MCF 10A (cell line): ENCODE measurements at regions of chr14 and their contacts with region 1.

Region 1: DNA sequence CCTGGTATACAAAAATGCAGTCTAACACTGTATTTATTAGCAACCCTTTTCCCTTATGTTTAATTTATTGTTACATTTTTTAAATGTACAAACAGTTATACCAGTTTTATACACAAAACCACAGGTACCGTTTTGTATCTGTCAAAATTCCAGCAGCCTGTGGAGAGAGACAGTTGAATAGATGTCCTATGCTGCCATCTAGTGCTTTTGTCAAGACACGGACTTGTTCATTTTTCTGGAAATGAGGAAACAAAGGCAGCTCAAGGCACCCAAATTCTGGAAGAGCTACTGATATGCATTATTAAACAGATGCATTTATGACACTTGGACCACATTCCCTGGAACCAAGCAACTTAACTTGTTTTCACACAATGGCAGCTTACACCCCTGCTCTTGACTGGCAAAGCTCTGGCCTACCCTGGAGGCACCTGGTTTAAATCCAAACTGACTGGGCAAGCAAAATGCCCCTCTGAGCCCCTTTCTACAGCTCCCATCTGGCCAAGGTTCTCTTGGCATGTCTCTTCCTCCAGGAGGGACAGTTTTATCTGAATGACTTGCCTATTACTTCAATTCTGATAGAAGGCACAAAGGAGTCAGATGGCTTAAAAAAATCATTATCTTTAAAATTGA is 286.9 kb upstream of the PRKD1 start:
- DNase-seq: peak; percentile 72
- H3K4me3 Mint-ChIP-seq: no peak overlapping the region
- H3K27ac Mint-ChIP-seq: no peak overlapping the region
- H3K4me1 Mint-ChIP-seq: peaks cover 4% of the 10 kb centered on the region
- H3K27me3 Mint-ChIP-seq: no peaks in the 10 kb centered on the region
- CTCF ChIP-seq: peak; percentile 54

Region 2: GRCh38 chr14:29016050-29016900 is 1198.3 kb before region 1 on chr14:
- CTCF ChIA-PET with region 1: interaction called, 3 read pairs
- POLR2A ChIA-PET with region 1: no interaction called
- intact Hi-C with region 1: loop called (anchors 10 kb)
- DNase-seq: peak; percentile 31
- H3K4me3 Mint-ChIP-seq: no peak overlapping the region
- H3K27ac Mint-ChIP-seq: no peak overlapping the region
- H3K4me1 Mint-ChIP-seq: no peaks in the 10 kb centered on the region
- H3K27me3 Mint-ChIP-seq: peaks cover 73% of the 10 kb centered on the region
- CTCF ChIP-seq: peak; percentile 75

Region 3: GRCh38 chr14:29463727-29464395 is 750.7 kb before region 1 on chr14:
- CTCF ChIA-PET with region 1: no interaction called
- POLR2A ChIA-PET with region 1: no interaction called
- intact Hi-C with region 1: no loop called
- DNase-seq: no peak
- H3K4me3 Mint-ChIP-seq: no peak overlapping the region
- H3K27ac Mint-ChIP-seq: no peak overlapping the region
- H3K4me1 Mint-ChIP-seq: no peaks in the 10 kb centered on the region
- H3K27me3 Mint-ChIP-seq: peaks cover 99% of the 10 kb centered on the region
- CTCF ChIP-seq: no peak

Region 4: DNA sequence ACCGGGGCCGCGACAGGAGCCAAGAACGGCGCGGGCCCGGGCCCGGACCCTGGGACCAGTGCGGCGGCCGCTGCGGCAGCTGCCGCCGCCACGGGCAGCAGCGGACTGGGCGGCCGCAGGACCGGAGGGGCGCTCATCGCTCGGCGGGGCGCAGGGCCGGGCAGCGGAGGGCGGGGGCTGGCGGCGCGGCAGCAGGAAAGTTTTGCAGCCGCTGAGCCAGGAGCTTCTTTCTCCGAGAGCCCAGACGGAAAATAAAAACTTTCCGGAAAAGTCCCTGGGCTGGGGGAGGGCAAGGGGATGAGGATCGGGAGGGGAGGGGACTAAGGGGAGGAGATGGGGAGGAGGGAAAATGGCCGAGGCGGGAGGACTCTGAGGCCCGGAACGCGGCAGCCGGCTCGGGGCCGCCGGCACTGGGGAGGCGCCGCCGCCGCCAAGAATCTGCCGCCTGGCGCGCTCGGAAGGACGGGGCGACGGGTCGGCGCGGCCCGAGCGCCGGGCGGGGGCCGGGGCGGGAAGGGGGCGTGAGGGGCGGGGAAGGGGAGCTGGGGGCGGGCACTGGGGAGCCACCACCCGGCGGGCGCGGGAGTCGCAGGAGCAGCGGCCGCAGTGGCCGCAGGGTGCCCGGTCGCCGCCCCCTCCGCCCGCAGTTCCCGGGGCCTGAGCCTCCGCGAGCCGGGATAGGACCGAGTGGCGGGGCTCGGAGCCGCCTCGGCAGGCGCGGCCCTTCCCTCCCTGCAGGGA is 287.0 kb before region 1 on chr14 and contains the start of gene PRKD1:
- CTCF ChIA-PET with region 1: interaction called, 3 read pairs
- POLR2A ChIA-PET with region 1: no interaction called
- intact Hi-C with region 1: loop called (anchors 10 kb)
- DNase-seq: peak; percentile 50
- H3K4me3 Mint-ChIP-seq: peak within 1 kb of the TSS; percentile 98
- H3K27ac Mint-ChIP-seq: peak within 1 kb of the TSS; percentile 26
- H3K4me1 Mint-ChIP-seq: peaks cover 38% of the 10 kb centered on the region
- H3K27me3 Mint-ChIP-seq: no peaks in the 10 kb centered on the region
- CTCF ChIP-seq: peak; percentile 17
- total RNA-seq, gene PRKD1: 7.9 and 8.8 TPM in 2 replicates

Region 5: DNA sequence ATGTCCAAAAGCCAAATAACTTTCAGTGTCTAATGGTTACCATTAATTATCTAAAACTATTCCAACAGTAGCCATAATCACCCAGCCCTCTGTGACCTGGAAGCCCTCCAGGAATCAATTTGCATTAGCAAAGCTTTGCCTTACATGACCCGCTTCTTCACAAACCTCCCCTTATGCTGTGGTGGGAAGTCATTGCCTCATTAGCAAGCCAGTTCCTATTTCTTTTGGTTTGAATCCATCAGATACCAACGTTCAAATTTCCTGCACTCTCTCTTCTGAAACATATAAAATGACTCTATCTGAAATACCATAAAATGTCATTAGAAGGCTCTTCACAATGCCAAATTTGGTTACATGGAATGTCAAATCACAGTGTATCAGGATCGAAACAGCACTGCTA is 18.6 kb before region 1 on chr14:
- CTCF ChIA-PET with region 1: interaction called, 13 read pairs
- POLR2A ChIA-PET with region 1: no interaction called
- intact Hi-C with region 1: no loop called
- DNase-seq: no peak
- H3K4me3 Mint-ChIP-seq: no peak overlapping the region
- H3K27ac Mint-ChIP-seq: no peak overlapping the region
- H3K4me1 Mint-ChIP-seq: peaks cover 22% of the 10 kb centered on the region
- H3K27me3 Mint-ChIP-seq: no peaks in the 10 kb centered on the region
- CTCF ChIP-seq: no peak

Region 6: GRCh38 chr14:30270200-30271161 is 55.9 kb after region 1 on chr14:
- CTCF ChIA-PET with region 1: interaction called, 44 read pairs
- POLR2A ChIA-PET with region 1: interaction called, 5 read pairs
- intact Hi-C with region 1: loop called (anchors 2 kb)
- DNase-seq: peak; percentile 90
- H3K4me3 Mint-ChIP-seq: peak overlapping the region; percentile 2
- H3K27ac Mint-ChIP-seq: peak overlapping the region; percentile 40
- H3K4me1 Mint-ChIP-seq: peaks cover 20% of the 10 kb centered on the region
- H3K27me3 Mint-ChIP-seq: no peaks in the 10 kb centered on the region
- CTCF ChIP-seq: peak; percentile 80

Region 7: DNA sequence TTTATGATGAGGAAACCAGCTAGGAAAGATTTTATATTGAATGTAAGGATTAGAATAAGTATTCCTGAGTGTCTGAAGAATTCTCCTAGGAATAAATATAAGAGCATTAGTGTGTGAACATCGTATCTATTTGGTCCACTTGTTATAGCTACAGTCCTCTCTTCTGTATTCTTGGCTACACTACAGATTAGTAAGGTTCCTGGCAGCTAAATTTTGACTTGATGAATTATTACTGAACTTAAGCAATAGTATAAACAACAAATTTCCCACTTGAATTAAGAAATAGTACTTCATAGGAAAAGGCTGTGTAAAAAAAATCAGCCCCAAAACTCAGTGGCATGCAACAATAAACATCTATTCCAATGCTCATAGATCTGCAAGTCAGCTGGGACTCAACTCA is 205.9 kb after region 1 on chr14:
- CTCF ChIA-PET with region 1: no interaction called
- POLR2A ChIA-PET with region 1: no interaction called
- intact Hi-C with region 1: no loop called
- DNase-seq: no peak
- H3K4me3 Mint-ChIP-seq: no peak overlapping the region
- H3K27ac Mint-ChIP-seq: no peak overlapping the region
- H3K4me1 Mint-ChIP-seq: no peaks in the 10 kb centered on the region
- H3K27me3 Mint-ChIP-seq: peaks cover 39% of the 10 kb centered on the region
- CTCF ChIP-seq: no peak

Region 8: GRCh38 chr14:30443368-30444007 is 228.9 kb after region 1 on chr14:
- CTCF ChIA-PET with region 1: interaction called, 20 read pairs
- POLR2A ChIA-PET with region 1: no interaction called
- intact Hi-C with region 1: no loop called
- DNase-seq: peak; percentile 56
- H3K4me3 Mint-ChIP-seq: no peak overlapping the region
- H3K27ac Mint-ChIP-seq: no peak overlapping the region
- H3K4me1 Mint-ChIP-seq: no peaks in the 10 kb centered on the region
- H3K27me3 Mint-ChIP-seq: peaks cover 24% of the 10 kb centered on the region
- CTCF ChIP-seq: peak; percentile 57